ENCODE measurements at regions of chr20 and their contacts with region 1.

Region 1: GRCh38 chr20:37845241-37845711 is 57.7 kb upstream of the VSTM2L start:
- DNase-seq: no peak
- H3K4me3 ChIP-seq: no peak overlapping the region
- H3K27ac ChIP-seq: no peak overlapping the region
- H3K4me1 ChIP-seq: no peaks in the 10 kb centered on the region
- H3K27me3 ChIP-seq: no peaks in the 10 kb centered on the region
- CTCF ChIP-seq: no peak

Region 2: GRCh38 chr20:37804584-37805566 is 40.4 kb before region 1 on chr20:
- CTCF ChIA-PET with region 1: no interaction called
- dilution Hi-C with region 1: loop called (anchors 5 kb)
- in situ Hi-C with region 1: no loop called
- intact Hi-C with region 1: no loop called
- DNase-seq: no peak
- H3K4me3 ChIP-seq: no peak overlapping the region
- H3K27ac ChIP-seq: no peak overlapping the region
- H3K4me1 ChIP-seq: no peaks in the 10 kb centered on the region
- H3K27me3 ChIP-seq: no peaks in the 10 kb centered on the region
- CTCF ChIP-seq: no peak

Region 3: DNA sequence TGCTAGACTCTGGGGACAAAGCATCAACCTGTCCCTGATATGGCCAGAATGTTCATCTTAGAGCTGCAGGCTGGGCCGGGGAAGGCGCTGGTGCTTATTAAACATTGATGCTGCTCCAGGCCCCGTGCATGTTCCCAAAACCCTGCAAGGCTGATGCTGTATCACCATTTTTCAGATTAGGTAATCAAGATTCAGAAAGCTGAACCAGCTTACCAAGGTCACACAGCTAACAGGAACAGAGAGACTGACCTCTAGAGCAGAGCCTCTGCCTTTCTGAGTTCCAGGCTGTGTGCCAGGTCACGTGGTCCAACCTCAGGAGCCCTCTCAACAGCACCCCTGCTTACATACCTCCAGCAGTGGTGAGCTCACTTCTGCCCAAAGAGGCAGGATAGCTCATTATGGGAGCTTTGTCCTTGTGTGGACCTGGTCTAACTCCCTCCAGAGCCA is 41.6 kb after region 1 on chr20:
- CTCF ChIA-PET with region 1: no interaction called
- dilution Hi-C with region 1: loop called (anchors 5 kb)
- in situ Hi-C with region 1: no loop called
- intact Hi-C with region 1: no loop called
- DNase-seq: no peak
- H3K4me3 ChIP-seq: no peak overlapping the region
- H3K27ac ChIP-seq: no peak overlapping the region
- H3K4me1 ChIP-seq: no peaks in the 10 kb centered on the region
- H3K27me3 ChIP-seq: no peaks in the 10 kb centered on the region
- CTCF ChIP-seq: no peak

Region 4: GRCh38 chr20:37932900-37933299 is 87.6 kb after region 1 on chr20:
- CTCF ChIA-PET with region 1: no interaction called
- dilution Hi-C with region 1: no loop called
- in situ Hi-C with region 1: no loop called
- intact Hi-C with region 1: no loop called
- DNase-seq: no peak
- H3K4me3 ChIP-seq: no peak overlapping the region
- H3K27ac ChIP-seq: no peak overlapping the region
- H3K4me1 ChIP-seq: no peaks in the 10 kb centered on the region
- H3K27me3 ChIP-seq: no peaks in the 10 kb centered on the region
- CTCF ChIP-seq: no peak

Region 5: DNA sequence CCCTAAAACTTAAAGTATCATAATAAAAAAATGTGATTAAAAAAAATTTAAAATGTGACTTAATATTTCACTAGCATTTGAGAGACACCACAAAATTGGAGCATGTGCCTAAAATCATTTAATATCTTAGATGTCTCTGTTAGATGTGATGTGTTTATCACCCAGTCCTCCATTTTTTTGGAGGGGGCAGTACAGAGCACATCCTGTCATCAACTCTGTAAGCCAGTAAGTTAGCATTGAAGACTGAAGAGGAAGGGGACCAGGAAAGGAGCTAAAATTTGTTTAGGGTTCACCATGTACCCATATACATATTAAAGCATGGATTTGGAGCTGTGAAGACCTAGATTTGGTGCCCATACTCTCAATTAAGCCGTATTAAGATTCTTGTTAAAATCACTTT is 705.0 kb after region 1 on chr20:
- CTCF ChIA-PET with region 1: no interaction called
- dilution Hi-C with region 1: no loop called
- in situ Hi-C with region 1: no loop called
- intact Hi-C with region 1: no loop called
- DNase-seq: no peak
- H3K4me3 ChIP-seq: no peak overlapping the region
- H3K27ac ChIP-seq: no peak overlapping the region
- H3K4me1 ChIP-seq: peaks cover 2% of the 10 kb centered on the region
- H3K27me3 ChIP-seq: no peaks in the 10 kb centered on the region
- CTCF ChIP-seq: peak; percentile 14 to 21